ENCODE measurements at regions of chr12 and their contacts with region 1.

Region 1: GRCh38 chr12:949453-950191 is at the start of gene RAD52:
- DNase-seq: peak; percentile 93 to 98 (median 96)
- H3K4me3 ChIP-seq: peak within 1 kb of the TSS; percentile 58 to 99 (median 87)
- H3K27ac ChIP-seq: peak within 1 kb of the TSS; percentile 76 to 97 (median 92)
- H3K27me3 ChIP-seq: no peaks in the 10 kb centered on the region
- CTCF ChIP-seq: peak; percentile 95 to 100 (median 99)
- total RNA-seq, gene RAD52: 14.4 to 71.1 (median 31.1) TPM

Region 2: GRCh38 chr12:452667-453210 is 496.9 kb before region 1 on chr12:
- intact Hi-C with region 1: loop called in 1 of 2 experiments (anchors 5 kb)
- DNase-seq: peak in 2 of 10 donors; percentile 18 to 34
- H3K4me3 ChIP-seq: no peak overlapping the region
- H3K27ac ChIP-seq: peak overlapping the region in 1 of 59 donors; percentile 34
- H3K27me3 ChIP-seq: no peaks in the 10 kb centered on the region
- CTCF ChIP-seq: peak in 1 of 56 donors; percentile 28

Region 3: DNA sequence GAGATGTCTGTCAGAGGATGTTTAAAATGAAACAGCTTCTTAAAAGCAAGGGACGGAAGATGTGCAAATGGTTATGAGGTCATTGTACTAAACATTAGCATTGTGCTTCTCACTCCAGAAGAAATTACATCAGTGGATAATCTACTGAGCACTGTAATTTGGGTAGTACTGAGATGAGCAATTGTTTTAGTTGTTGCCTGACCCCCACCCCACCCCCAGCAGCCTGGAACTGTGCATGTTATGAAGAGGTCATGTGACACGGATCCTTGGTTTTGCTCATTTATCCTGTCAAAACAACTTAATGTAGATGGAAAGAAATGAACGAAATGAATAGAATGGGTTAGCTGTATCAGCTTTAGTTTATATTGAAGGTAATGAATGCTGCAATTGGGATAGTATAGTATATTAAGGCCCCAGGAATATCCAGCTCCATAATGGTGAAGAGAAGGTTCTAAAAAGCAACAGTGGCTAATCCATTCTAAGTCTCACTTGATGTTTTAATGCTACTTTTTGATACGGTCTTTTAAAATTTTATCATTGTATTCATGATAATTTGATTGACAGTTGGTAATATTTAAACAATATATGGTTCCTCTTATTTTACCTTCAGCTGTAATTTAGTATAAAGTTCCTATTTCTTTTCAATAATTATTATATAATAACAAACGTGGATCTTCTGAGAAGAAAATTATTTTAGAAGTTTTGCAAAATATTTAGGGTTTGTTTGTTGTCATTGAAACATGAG is 138.8 kb before region 1 on chr12:
- intact Hi-C with region 1: loop called (anchors 2 to 5 kb)
- DNase-seq: peak in 1 of 10 donors; percentile 21
- H3K4me3 ChIP-seq: peak overlapping the region in 7 of 59 donors; percentile 4 to 35 (median 16)
- H3K27ac ChIP-seq: peak overlapping the region in 41 of 59 donors; percentile 0 to 74 (median 40)
- H3K27me3 ChIP-seq: no peaks in the 10 kb centered on the region
- CTCF ChIP-seq: no peak

Region 4: DNA sequence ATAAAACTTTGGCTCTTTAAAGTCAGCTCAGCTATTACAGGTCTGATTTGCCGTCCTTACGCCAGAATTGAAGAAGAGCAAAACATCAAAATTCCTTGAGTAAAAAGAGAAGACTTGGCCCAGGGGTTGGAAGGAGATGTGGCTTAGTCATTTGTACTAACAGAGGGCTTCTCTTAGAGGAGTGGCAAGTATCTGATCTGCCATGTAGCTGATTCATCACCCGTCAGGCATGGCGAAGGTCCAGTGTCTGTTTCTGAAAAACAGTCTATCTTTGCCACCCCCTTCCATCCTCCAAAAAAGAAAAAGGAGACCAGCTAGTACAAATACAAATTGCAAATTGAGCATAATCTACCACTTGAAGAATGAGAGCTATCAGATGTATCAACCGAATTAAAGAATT is 92.0 kb before region 1 on chr12:
- intact Hi-C with region 1: no loop called
- DNase-seq: peak in 7 of 10 donors; percentile 43 to 80 (median 55)
- H3K4me3 ChIP-seq: no peak overlapping the region
- H3K27ac ChIP-seq: peak overlapping the region in 41 of 59 donors; percentile 3 to 76 (median 33)
- H3K27me3 ChIP-seq: no peaks in the 10 kb centered on the region
- CTCF ChIP-seq: no peak

Region 5: DNA sequence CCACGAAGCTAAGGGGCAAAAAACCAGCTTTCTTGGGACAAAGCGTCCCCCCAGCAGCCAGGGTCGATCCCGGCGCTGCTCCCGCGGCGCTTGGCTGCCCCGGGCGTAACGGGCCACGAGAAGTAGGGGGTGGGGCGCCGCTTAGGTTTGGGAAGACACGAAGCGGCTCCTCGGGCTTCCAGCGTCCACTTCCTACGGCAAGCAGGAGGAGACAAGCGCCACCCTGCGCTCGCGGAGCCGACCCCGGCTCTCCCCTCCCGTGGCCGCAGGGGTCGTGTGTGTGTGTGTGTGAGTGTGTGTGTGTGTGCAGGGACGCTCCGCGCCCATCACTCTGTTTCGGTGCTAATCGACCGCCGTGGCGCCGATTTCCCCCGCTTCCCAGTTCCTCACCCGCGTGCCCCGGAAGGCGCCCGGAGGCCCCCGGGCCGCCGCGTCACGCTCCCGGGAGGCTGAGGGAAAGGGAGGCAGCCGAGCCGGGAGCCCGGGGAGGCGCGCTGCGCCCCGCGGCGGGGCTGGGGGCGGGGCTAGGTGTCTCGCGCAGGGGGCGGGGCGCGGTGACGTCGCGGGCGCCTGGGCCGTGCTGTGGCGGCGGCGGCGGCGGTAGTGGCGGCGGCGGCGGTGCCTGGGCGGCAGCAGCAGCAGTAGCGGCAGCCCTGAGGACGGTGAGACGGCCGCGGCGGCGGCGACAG is 41.2 kb after region 1 on chr12 and contains the start of gene ERC1:
- intact Hi-C with region 1: loop called (anchors 1 kb)
- DNase-seq: peak; percentile 76 to 94 (median 84)
- H3K4me3 ChIP-seq: peak within 1 kb of the TSS; percentile 60 to 97 (median 89)
- H3K27ac ChIP-seq: peak within 1 kb of the TSS; percentile 75 to 99 (median 96)
- H3K27me3 ChIP-seq: no peaks in the 10 kb centered on the region
- CTCF ChIP-seq: peak in 29 of 56 donors; percentile 5 to 57 (median 22)
- total RNA-seq, gene ERC1: 50.9 to 130 (median 83.8) TPM

Region 6: DNA sequence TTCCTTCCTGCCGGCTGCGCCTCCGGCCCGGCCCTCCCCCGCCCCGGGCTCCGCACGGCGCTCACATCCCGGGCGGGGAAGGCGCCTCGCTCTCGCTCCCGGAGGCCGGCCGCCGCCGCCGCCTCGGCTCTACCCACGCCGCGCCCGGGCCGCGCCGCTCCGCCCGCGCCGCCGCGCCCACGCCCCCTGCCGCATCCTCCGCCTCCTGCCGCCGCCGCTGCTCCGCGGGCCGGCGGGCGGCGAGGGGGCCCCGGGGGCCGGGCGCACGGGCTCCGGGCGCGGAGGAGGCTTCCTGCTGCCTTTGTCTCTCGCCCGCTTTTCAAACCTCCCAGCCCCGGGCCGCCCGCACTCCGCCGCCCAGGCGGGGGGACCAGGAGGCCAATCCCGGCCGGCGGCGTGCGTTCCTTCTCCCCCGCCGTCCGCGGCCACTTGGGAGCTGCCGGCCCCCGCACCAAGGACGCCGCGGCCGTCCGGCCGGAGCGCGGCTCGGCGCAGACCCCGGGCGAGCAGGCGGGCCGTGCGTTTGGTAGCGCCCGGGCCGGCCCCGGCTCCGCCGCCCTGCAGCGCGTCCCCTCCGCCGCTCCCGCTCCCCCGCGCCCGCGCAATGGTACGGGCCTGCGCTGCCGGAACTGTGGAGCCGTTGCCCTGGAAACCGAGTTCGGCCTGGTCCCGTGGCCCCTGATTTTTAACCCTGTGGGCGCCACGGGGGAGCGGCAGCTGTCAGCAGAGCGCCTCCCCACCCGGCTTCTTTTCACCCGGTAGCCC is 644.8 kb after region 1 on chr12 and contains the start of gene FBXL14:
- intact Hi-C with region 1: loop called in 1 of 2 experiments (anchors 2 kb)
- DNase-seq: peak; percentile 83 to 93 (median 90)
- H3K4me3 ChIP-seq: peak within 1 kb of the TSS; percentile 63 to 93 (median 81)
- H3K27ac ChIP-seq: peak within 1 kb of the TSS; percentile 91 to 100 (median 99)
- H3K27me3 ChIP-seq: no peaks in the 10 kb centered on the region
- CTCF ChIP-seq: peak in 14 of 56 donors; percentile 2 to 31 (median 13)
- total RNA-seq, gene FBXL14: 26.6 to 73.6 (median 35.7) TPM